ENCODE measurements at regions of chr9 and their contacts with region 1.

Region 1: GRCh38 chr9:34376596-34377403 is at the start of gene MYORG:
- DNase-seq: peak; percentile 97
- ATAC-seq: peak; percentile 85
- H3K4me3 ChIP-seq: peak within 1 kb of the TSS; percentile 69 to 85 (median 80)
- H3K4me3 Mint-ChIP-seq: peak within 1 kb of the TSS; percentile 98
- H3K27ac ChIP-seq: no peak within 1 kb of the TSS
- H3K27ac Mint-ChIP-seq: peak within 1 kb of the TSS; percentile 91
- H3K4me1 ChIP-seq: peaks cover 29 to 43% of the 10 kb centered on the region in 2 donors
- H3K4me1 Mint-ChIP-seq: peaks cover 39% of the 10 kb centered on the region
- H3K27me3 ChIP-seq: peaks cover 0 to 15% (median 4%) of the 10 kb centered on the region in 4 experiments
- H3K27me3 Mint-ChIP-seq: no peaks in the 10 kb centered on the region
- CTCF ChIP-seq: peak; percentile 29
- total RNA-seq, gene MYORG: 0.37 and 0.49 TPM in 2 replicates

Region 2: DNA sequence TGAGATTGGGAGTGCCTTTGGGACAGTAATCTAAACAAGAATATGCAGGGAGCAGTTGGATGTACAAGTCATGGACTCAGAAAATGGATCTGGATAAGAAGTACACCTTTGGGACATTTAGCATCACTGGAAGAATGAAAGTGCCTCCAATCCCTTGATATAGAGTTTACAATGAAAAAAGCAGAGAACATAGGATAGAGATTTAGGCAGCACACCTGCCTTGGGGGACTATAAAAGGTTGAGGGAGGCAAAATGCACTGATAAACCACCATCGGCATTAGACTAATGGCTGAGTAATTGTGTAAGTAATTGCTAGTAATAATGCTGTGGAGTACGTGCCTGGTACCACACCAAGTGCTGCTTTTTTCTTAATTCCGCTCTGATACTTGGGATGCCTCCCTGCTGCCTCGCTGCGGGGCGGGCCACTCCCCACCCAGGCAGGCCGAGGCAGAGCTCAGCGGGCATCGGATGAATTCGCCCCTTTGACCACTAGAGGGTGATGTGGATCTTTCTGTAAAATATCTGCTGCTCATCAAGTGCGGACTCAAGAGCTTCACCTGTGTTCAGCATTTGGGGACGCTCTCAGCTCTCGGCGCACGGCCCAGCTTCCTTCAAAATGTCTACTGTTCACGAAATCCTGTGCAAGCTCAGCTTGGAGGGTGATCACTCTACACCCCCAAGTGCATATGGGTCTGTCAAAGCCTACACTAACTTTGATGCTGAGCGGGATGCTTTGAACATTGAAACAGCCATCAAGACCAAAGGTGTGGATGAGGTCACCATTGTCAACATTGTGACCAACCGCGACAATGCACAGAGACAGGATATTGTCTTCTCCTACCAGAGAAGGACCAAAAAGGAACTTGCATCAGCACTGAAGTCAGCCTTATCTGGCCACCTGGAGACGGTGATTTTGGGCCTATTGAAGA is 752.9 kb before region 1 on chr9:
- CTCF ChIA-PET with region 1: interaction called, 4 read pairs
- POLR2A ChIA-PET with region 1: no interaction called
- intact Hi-C with region 1: loop called (anchors 5 kb)
- DNase-seq: peak; percentile 82
- ATAC-seq: peak; percentile 92
- H3K4me3 ChIP-seq: no peak overlapping the region
- H3K4me3 Mint-ChIP-seq: no peak overlapping the region
- H3K27ac ChIP-seq: no peak overlapping the region
- H3K27ac Mint-ChIP-seq: no peak overlapping the region
- H3K4me1 ChIP-seq: no peaks in the 10 kb centered on the region
- H3K4me1 Mint-ChIP-seq: no peaks in the 10 kb centered on the region
- H3K27me3 ChIP-seq: peaks cover 0 to 13% (median 7%) of the 10 kb centered on the region in 4 experiments
- H3K27me3 Mint-ChIP-seq: peaks cover 40% of the 10 kb centered on the region
- CTCF ChIP-seq: peak; percentile 87

Region 3: DNA sequence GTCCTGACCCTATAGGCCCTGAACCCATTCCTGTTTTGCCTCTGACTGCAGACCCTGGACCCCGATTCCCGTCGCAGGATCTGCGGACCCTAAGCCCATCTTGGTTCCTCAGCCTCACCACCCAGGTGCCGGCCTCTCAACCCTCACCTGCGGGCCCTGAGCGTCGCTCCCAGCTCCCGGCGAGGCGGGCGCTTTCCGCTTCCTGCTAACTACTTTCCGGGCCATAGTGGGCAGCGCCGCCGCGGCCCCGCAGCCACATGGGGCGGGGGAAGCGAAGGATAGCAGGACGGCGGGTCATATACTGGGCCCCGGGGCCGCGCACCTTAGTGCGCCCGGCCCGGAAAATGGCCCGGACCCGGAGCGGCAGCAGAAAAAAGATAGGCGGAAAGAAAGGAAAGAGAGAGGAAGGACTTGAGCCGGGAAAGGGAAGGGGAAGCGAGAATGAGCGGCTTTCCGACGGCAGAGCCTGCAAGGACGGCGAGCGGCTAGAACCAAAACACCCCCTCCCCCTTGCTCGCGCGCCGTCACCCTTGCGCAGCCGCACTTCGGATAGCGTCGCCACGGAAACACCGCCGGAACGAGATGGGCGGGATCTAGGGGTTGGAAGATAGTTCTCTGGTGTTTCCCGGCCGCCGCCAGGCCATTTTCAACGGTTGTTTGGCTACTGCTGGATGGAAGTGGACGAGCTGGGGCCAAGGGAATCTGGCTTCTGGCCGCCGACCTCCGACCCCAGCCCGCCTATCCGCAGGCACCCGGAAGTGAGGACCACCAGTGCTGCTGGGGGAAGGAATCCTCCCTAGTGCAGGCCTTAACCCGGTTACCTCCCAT is 250.4 kb before region 1 on chr9 and contains the start of gene DCAF12:
- CTCF ChIA-PET with region 1: no interaction called
- POLR2A ChIA-PET with region 1: no interaction called
- intact Hi-C with region 1: loop called (anchors 5 kb)
- DNase-seq: peak; percentile 84
- ATAC-seq: peak; percentile 55
- H3K4me3 ChIP-seq: peak within 1 kb of the TSS; percentile 44 to 67 (median 58)
- H3K4me3 Mint-ChIP-seq: peak within 1 kb of the TSS; percentile 93
- H3K27ac ChIP-seq: no peak within 1 kb of the TSS
- H3K27ac Mint-ChIP-seq: peak within 1 kb of the TSS; percentile 60
- H3K4me1 ChIP-seq: peaks cover 51 to 55% of the 10 kb centered on the region in 2 donors
- H3K4me1 Mint-ChIP-seq: peaks cover 48% of the 10 kb centered on the region
- H3K27me3 ChIP-seq: peaks cover 0 to 81% (median 56%) of the 10 kb centered on the region in 4 experiments
- H3K27me3 Mint-ChIP-seq: peaks cover 50% of the 10 kb centered on the region
- CTCF ChIP-seq: no peak
- total RNA-seq, gene DCAF12: 1.9 and 2.3 TPM in 2 replicates

Region 4: DNA sequence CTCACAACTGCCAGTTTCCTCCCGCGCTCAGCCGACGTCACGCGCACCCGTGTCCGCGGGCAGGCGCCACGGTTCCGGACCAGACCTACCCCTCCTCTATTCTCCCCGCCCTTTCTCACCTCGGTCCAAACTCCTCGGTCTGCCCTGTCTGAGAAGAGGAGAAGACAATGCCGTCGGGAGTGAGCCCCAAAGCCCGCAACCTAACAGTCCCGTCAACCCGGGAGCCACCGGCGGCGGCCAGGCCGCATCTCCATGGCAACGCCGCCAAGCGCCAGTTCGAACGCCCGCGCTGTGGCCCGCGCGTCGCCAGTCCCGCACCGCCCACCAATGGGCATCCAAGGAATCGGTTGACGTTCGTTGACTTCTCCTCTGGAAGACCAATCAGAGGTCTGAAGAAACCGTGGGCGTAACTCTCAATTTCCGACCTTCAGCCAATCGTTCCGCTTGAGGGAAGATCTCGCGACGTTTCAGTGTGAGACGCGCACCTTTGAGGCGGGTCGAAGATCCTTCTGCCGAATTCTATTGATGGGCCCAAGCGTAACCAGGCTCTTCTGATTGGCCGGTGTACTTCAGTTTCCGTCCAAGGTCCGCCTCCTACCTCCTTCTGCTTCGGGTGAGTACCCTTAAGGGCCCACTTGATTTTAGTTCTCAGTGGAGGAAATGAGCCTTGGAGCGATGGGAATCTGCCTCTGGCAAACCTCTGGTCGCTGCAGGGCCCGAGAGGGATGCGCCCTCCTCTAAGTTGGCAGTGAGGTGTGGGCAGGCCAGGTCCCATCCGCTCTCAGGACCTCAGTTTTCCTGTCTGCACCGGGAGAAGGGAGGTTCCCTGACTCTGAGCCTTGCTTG is 47.6 kb before region 1 on chr9 and contains the starts of genes KIF24 and NUDT2:
- CTCF ChIA-PET with region 1: interaction called, 72 read pairs
- POLR2A ChIA-PET with region 1: interaction called, 5 read pairs
- intact Hi-C with region 1: loop called (anchors 1 kb)
- DNase-seq: peak; percentile 99
- ATAC-seq: peak; percentile 91
- H3K4me3 ChIP-seq: peak within 1 kb of the TSS; percentile 90 to 99 (median 97)
- H3K4me3 Mint-ChIP-seq: peak within 1 kb of the TSS; percentile 96
- H3K27ac ChIP-seq: peak within 1 kb of the TSS; percentile 92 to 99
- H3K27ac Mint-ChIP-seq: peak within 1 kb of the TSS; percentile 93
- H3K4me1 ChIP-seq: peaks cover 14 to 25% of the 10 kb centered on the region in 2 donors
- H3K4me1 Mint-ChIP-seq: peaks cover 29% of the 10 kb centered on the region
- H3K27me3 ChIP-seq: no peaks in the 10 kb centered on the region
- H3K27me3 Mint-ChIP-seq: no peaks in the 10 kb centered on the region
- CTCF ChIP-seq: no peak
- total RNA-seq, gene KIF24: 0.79 and 0.87 TPM in 2 replicates
- total RNA-seq, gene NUDT2: 16.1 and 20.4 TPM in 2 replicates

Region 5: GRCh38 chr9:34362614-34363214 is 14.1 kb before region 1 on chr9:
- CTCF ChIA-PET with region 1: no interaction called
- POLR2A ChIA-PET with region 1: no interaction called
- intact Hi-C with region 1: no loop called
- DNase-seq: no peak
- ATAC-seq: no peak
- H3K4me3 ChIP-seq: no peak overlapping the region
- H3K4me3 Mint-ChIP-seq: no peak overlapping the region
- H3K27ac ChIP-seq: no peak overlapping the region
- H3K27ac Mint-ChIP-seq: no peak overlapping the region
- H3K4me1 ChIP-seq: no peaks in the 10 kb centered on the region
- H3K4me1 Mint-ChIP-seq: no peaks in the 10 kb centered on the region
- H3K27me3 ChIP-seq: no peaks in the 10 kb centered on the region
- H3K27me3 Mint-ChIP-seq: no peaks in the 10 kb centered on the region
- CTCF ChIP-seq: no peak

Region 6: DNA sequence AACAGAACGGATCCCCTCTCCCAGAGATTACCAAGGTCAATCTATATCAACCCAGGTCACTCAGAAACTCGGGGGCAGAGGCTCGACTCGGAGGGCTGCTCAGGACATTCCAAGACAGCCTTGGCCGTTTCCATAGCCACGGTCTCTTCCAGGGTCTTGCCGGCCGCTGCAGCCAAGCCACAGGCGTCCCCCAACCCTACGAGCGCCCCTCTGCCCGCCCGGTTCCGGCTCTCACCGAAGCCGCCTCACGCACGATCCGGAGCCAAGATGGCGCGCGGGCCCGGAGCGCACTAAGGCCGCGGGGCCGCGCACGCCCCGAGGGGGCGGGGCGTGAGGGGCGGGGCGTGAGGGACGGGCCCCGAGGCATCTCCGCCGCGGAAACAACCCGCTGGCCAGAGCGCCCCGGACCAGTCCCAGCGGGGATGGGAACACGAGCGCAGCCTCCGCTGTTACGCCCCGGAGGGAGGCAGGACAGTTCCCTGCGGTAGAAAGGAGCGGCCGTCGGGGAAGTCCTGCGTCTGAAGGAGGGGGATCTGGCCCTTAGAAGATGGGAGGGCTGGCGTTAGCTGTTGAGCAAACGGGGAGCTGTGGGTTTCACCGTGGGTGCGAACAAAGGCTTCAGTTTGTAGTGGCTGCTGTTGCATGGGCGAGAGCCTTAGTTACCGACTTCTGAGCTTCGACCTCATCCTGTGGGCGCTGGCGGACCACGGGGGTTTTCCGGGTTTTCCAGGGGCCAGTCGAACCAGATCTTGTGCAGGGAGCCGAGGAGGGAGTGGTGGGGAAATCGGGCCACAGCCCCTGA is 235.2 kb after region 1 on chr9 and contains the start of gene RPP25L:
- CTCF ChIA-PET with region 1: interaction called, 4 read pairs
- POLR2A ChIA-PET with region 1: no interaction called
- intact Hi-C with region 1: loop called (anchors 1 kb)
- DNase-seq: peak; percentile 91
- ATAC-seq: peak; percentile 95
- H3K4me3 ChIP-seq: peak within 1 kb of the TSS; percentile 69 to 97 (median 80)
- H3K4me3 Mint-ChIP-seq: peak within 1 kb of the TSS; percentile 91
- H3K27ac ChIP-seq: peak within 1 kb of the TSS; percentile 78 to 87
- H3K27ac Mint-ChIP-seq: peak within 1 kb of the TSS; percentile 90
- H3K4me1 ChIP-seq: peaks cover 7 to 21% of the 10 kb centered on the region in 2 donors
- H3K4me1 Mint-ChIP-seq: peaks cover 22% of the 10 kb centered on the region
- H3K27me3 ChIP-seq: no peaks in the 10 kb centered on the region
- H3K27me3 Mint-ChIP-seq: no peaks in the 10 kb centered on the region
- CTCF ChIP-seq: no peak
- total RNA-seq, gene RPP25L: 20.2 and 21.7 TPM in 2 replicates

Region 7: DNA sequence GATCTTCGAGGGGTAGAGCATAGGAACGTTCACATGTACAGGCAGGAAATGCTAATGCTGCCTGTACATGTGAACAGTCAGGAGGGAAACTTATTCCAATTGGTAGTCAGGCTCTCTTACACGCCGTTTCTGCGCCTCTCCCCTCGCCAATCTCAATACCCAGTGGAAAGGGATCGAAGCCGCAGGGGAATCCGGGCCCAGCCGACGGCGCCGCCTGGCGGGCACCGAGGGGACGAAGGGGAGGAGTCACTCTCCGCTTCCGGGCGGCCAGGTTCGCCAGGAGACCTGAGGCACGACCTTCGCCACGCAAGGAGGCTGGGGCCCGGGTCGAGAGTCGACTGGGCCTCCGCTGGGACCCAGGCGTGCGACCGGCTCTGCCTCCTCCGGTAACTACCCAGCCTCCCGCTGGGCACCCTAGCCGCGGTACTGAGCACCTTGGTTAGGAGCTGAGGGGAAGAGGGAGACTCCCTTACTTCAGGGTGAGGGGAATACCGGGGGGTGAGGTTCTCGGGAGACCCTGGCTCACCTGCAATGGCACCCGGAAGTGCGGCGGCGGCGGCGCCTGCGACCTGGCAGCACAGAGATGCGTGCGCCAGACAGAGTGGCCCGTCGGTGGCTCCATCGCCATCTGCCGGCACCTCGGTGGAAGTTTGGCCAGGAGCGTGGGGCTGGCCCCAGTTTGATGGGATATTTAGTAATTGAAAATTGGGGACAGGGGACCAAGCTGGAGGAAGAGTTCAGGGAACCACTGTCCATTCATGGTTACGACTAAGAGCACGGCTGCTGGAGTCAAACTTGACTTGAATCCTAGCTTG is 719.4 kb after region 1 on chr9 and contains the start of gene PIGO:
- CTCF ChIA-PET with region 1: no interaction called
- POLR2A ChIA-PET with region 1: interaction called, 3 read pairs
- intact Hi-C with region 1: loop called (anchors 5 kb)
- DNase-seq: peak; percentile 94
- ATAC-seq: peak; percentile 92
- H3K4me3 ChIP-seq: peak within 1 kb of the TSS; percentile 61 to 100 (median 93)
- H3K4me3 Mint-ChIP-seq: peak within 1 kb of the TSS; percentile 90
- H3K27ac ChIP-seq: peak within 1 kb of the TSS; percentile 99
- H3K27ac Mint-ChIP-seq: peak within 1 kb of the TSS; percentile 94
- H3K4me1 ChIP-seq: peaks cover 7 to 16% of the 10 kb centered on the region in 2 donors
- H3K4me1 Mint-ChIP-seq: peaks cover 34% of the 10 kb centered on the region
- H3K27me3 ChIP-seq: no peaks in the 10 kb centered on the region
- H3K27me3 Mint-ChIP-seq: no peaks in the 10 kb centered on the region
- CTCF ChIP-seq: peak; percentile 85
- total RNA-seq, gene PIGO: 32.5 and 34.7 TPM in 2 replicates